Caco-2 (cell line): ENCODE measurements at regions of chr11 and their contacts with region 1.

Region 1: DNA sequence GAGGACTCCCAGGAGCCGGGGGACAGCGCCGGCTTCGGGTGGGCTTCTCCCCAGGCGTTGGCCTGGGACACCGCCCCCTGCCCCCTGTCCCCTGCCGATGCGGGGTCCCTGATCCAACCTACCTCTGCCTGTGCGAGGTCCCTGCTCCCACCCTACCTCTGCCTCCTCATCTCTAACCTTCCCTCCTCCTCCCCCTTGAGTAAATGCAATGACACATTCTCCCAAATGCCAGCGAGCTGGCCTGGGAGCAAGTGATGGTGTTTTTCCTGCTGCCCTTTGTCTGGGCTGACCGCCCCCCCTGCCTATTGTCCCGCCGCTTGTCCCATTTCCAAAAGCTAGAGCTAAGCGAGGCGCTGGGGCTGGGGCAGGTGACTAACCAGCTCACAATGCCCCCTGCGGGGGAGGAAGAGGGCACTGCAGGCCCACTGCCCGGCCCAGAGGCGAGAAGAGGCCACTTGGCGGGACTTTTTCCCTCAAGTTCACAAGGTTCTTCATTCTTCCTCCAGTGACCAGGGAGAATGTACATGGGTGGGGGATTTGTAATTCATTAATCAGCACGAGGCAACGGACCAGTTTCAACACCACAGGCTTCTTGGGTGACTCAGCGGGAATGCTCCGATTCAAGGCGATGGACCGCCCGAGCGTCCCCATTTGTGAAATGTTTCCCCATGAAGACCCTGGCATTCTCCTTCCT is 674 bp upstream of the CLCF1 start:
- DNase-seq: peak; percentile 95
- H3K4me3 ChIP-seq: peak overlapping the region; percentile 86
- H3K4me3 Mint-ChIP-seq: peak overlapping the region; percentile 95
- H3K27ac Mint-ChIP-seq: peak overlapping the region; percentile 83
- H3K4me1 ChIP-seq: peaks cover 31% of the 10 kb centered on the region
- H3K4me1 Mint-ChIP-seq: no peaks in the 10 kb centered on the region
- H3K27me3 ChIP-seq: no peaks in the 10 kb centered on the region
- H3K27me3 Mint-ChIP-seq: no peaks in the 10 kb centered on the region
- CTCF ChIP-seq: peak; percentile 89 to 97

Region 2: DNA sequence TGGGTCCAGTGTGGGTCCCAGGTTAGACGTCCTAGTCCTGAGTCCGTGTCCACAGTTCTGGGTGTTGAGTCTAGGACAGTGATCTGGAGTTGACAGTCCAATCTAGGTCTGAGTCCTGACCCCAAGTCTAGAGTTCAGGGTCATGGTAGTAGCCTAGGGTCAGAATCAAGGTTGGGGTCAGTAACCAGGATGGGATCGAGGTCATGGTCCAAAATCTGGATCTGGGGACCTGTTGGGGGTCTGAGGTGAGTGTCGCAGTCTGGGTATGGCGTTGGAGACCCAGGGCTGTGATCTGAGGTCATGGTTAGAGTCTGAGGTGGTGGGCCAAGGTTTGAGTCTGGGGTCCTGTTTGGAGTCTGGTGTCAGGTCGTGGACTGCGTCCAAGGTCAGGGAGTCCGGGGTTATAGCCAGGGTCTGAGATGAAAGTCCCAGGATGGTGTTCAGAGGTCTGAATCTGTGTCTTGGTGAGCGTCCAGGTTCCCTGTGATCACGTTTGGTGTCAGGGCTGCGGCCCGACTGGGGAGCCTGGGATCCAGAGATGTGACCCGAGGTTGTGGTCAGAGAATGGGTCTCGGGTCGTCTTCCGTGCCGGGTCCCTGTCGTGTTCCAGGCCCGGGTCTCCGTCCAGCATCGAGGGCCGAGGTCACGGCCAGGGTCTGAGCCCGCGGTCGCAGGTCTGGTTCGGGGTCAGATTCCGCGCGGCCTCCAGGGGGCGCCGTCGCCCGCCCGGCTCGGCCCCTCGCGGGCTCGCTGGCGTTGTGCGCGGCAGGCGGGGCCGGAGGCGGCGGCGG is 108.2 kb before region 1 on chr11:
- CTCF ChIA-PET with region 1: interaction called, 7 read pairs
- POLR2A ChIA-PET with region 1: interaction called, 11 read pairs
- intact Hi-C with region 1: no loop called
- DNase-seq: peak; percentile 80 to 96
- H3K4me3 ChIP-seq: peak overlapping the region; percentile 16
- H3K4me3 Mint-ChIP-seq: peak overlapping the region; percentile 100
- H3K27ac Mint-ChIP-seq: peak overlapping the region; percentile 95
- H3K4me1 ChIP-seq: peaks cover 31% of the 10 kb centered on the region
- H3K4me1 Mint-ChIP-seq: peaks cover 28% of the 10 kb centered on the region
- H3K27me3 ChIP-seq: no peaks in the 10 kb centered on the region
- H3K27me3 Mint-ChIP-seq: no peaks in the 10 kb centered on the region
- CTCF ChIP-seq: peak; percentile 78 to 84

Region 3: DNA sequence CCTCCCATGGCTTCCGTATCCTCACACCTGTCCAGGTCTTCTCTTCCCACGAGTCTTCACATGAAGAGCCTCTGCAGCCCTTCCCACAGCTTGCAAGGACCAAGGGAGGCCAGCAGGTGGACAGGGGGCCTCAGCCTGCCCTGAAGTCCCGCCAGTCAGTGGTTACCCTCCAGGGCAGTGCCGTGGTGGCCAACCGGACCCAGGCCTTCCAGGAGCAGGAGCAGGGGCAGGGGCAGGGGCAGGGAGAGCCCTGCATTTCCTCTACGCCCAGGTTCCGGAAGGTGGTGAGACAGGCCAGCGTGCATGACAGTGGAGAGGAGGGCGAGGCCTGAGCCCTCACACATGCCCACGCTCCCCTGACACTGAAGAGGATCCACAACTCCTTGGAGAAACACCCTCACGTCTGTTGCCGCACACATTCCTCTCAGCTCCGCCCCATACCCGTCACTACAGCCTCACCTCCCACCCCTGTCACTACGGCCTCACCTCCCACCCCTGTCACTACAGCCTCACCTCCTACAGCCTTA is 62.5 kb before region 1 on chr11:
- CTCF ChIA-PET with region 1: interaction called, 13 read pairs
- POLR2A ChIA-PET with region 1: no interaction called
- intact Hi-C with region 1: no loop called
- DNase-seq: peak in 1 of 2 experiments; percentile 49
- H3K4me3 ChIP-seq: no peak overlapping the region
- H3K4me3 Mint-ChIP-seq: no peak overlapping the region
- H3K27ac Mint-ChIP-seq: peak overlapping the region; percentile 4
- H3K4me1 ChIP-seq: peaks cover 21% of the 10 kb centered on the region
- H3K4me1 Mint-ChIP-seq: peaks cover 19% of the 10 kb centered on the region
- H3K27me3 ChIP-seq: no peaks in the 10 kb centered on the region
- H3K27me3 Mint-ChIP-seq: no peaks in the 10 kb centered on the region
- CTCF ChIP-seq: peak; percentile 6 to 47

Region 4: GRCh38 chr11:67353317-67354074 is 20.6 kb before region 1 on chr11 and contains the start of gene POLD4:
- CTCF ChIA-PET with region 1: interaction called, 775 read pairs
- POLR2A ChIA-PET with region 1: interaction called, 31 read pairs
- intact Hi-C with region 1: loop called (anchors 1 kb)
- DNase-seq: peak; percentile 99 to 100
- H3K4me3 ChIP-seq: peak within 1 kb of the TSS; percentile 50
- H3K4me3 Mint-ChIP-seq: peak within 1 kb of the TSS; percentile 83
- H3K27ac Mint-ChIP-seq: peak within 1 kb of the TSS; percentile 81
- H3K4me1 ChIP-seq: peaks cover 51% of the 10 kb centered on the region
- H3K4me1 Mint-ChIP-seq: peaks cover 27% of the 10 kb centered on the region
- H3K27me3 ChIP-seq: no peaks in the 10 kb centered on the region
- H3K27me3 Mint-ChIP-seq: no peaks in the 10 kb centered on the region
- CTCF ChIP-seq: no peak
- total RNA-seq, gene POLD4: 29.8 and 30.8 TPM in 2 replicates

Region 5: GRCh38 chr11:67407688-67408163 is 33.7 kb after region 1 on chr11:
- CTCF ChIA-PET with region 1: no interaction called
- POLR2A ChIA-PET with region 1: no interaction called
- intact Hi-C with region 1: no loop called
- DNase-seq: no peak
- H3K4me3 ChIP-seq: no peak overlapping the region
- H3K4me3 Mint-ChIP-seq: no peak overlapping the region
- H3K27ac Mint-ChIP-seq: peak overlapping the region; percentile 21
- H3K4me1 ChIP-seq: no peaks in the 10 kb centered on the region
- H3K4me1 Mint-ChIP-seq: peaks cover 7% of the 10 kb centered on the region
- H3K27me3 ChIP-seq: no peaks in the 10 kb centered on the region
- H3K27me3 Mint-ChIP-seq: no peaks in the 10 kb centered on the region
- CTCF ChIP-seq: no peak

Region 6: GRCh38 chr11:67420646-67421420 is 46.8 kb after region 1 on chr11:
- CTCF ChIA-PET with region 1: no interaction called
- POLR2A ChIA-PET with region 1: interaction called, 13 read pairs
- intact Hi-C with region 1: no loop called
- DNase-seq: peak; percentile 99 to 100
- H3K4me3 ChIP-seq: peak overlapping the region; percentile 59
- H3K4me3 Mint-ChIP-seq: peak overlapping the region; percentile 71
- H3K27ac Mint-ChIP-seq: peak overlapping the region; percentile 68
- H3K4me1 ChIP-seq: peaks cover 13% of the 10 kb centered on the region
- H3K4me1 Mint-ChIP-seq: peaks cover 32% of the 10 kb centered on the region
- H3K27me3 ChIP-seq: no peaks in the 10 kb centered on the region
- H3K27me3 Mint-ChIP-seq: no peaks in the 10 kb centered on the region
- CTCF ChIP-seq: no peak

Region 7: DNA sequence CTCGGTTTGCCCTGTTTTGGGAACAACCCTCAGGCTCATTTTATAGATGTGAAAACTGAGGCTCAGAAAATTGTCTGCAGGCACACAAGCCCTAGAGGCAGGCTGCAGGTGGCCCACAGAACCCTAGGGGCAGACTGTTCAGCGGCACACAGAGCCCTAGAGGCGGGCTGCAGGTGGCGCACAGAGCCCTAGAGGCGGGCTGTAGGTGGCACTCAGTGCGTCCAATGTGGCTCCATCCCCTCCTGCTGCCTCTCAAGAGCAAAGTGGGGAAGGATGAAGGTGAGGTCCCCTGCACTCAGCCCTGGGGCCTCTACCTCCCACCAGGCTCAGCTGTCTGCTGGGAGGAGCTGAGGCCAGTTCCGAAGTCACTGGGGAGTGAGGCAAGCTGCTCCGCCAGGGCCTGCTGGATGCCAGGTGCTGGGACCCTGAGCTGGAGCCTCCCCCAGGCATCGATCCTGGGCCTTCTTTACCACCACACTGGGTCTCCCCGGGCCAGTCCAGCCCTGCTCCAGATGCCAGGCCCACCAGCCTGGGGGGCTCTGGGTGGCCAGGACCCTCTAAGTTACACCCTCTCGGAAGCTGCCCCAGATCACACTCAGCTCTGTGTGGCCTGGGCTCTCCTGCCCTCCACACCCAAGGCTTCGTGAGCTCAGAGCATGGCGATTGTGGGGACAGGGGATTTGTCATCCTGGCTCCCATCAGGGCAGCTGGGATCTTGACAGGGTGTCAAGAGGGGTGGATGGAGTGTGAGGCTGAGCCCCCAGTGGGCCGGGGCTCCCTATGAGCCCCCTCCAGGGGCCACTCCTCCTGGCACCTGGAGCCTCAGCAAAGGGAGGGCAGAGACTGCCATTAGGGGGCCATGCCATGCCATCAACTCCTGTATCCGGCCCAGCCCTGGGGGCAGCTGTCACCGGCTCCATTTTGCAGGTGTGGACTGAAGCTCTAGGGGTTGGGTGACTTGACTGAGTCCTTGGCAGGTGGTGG is 274.4 kb after region 1 on chr11:
- CTCF ChIA-PET with region 1: no interaction called
- POLR2A ChIA-PET with region 1: no interaction called
- intact Hi-C with region 1: no loop called
- DNase-seq: peak; percentile 58 to 66
- H3K4me3 ChIP-seq: no peak overlapping the region
- H3K4me3 Mint-ChIP-seq: no peak overlapping the region
- H3K27ac Mint-ChIP-seq: no peak overlapping the region
- H3K4me1 ChIP-seq: peaks cover 15% of the 10 kb centered on the region
- H3K4me1 Mint-ChIP-seq: peaks cover 26% of the 10 kb centered on the region
- H3K27me3 ChIP-seq: no peaks in the 10 kb centered on the region
- H3K27me3 Mint-ChIP-seq: no peaks in the 10 kb centered on the region
- CTCF ChIP-seq: peak; percentile 53 to 73